ENCODE measurements at regions of chr2 and their contacts with region 1.

Region 1: GRCh38 chr2:203418271-203418670 is 90.1 kb downstream of the ABI2 start:
- DNase-seq: no peak
- H3K4me3 Mint-ChIP-seq: no peak overlapping the region
- H3K27ac Mint-ChIP-seq: no peak overlapping the region
- H3K4me1 Mint-ChIP-seq: no peaks in the 10 kb centered on the region
- H3K27me3 Mint-ChIP-seq: no peaks in the 10 kb centered on the region

Region 2: DNA sequence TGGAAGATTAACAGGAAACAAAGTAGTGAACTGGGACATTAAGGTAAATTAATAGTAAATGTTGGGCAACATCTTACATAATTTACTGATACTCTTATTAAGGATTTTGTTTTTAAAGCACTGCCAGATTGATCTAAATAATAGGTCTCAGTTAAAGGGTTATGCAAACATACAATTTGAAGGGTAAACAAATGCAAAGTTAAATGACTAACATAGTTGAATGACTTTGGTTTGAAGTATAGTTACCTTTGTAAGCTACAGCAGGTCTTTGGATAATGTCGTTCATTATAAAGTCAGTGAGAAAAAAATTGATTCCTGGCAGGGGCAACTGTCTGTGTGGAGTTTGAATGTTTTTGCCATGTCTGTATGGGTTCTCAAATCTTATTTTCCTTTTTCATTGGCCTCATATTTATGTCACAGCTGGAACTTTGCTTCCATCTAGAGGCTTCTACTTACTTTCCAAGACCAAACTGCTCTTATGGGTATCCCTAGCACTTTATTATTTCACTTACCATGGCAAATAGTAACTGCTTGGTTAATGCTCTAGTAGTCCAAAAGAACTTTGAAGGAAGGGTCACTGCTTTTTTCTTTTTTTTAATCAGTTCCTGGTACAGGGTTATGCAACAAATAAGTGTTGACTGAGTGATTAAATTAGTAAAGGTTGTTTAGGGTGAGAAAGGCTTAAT is 295.8 kb before region 1 on chr2:
- CTCF ChIA-PET with region 1: no interaction called
- intact Hi-C with region 1: no loop called
- DNase-seq: no peak
- H3K4me3 Mint-ChIP-seq: no peak overlapping the region
- H3K27ac Mint-ChIP-seq: no peak overlapping the region
- H3K4me1 Mint-ChIP-seq: no peaks in the 10 kb centered on the region
- H3K27me3 Mint-ChIP-seq: no peaks in the 10 kb centered on the region

Region 3: DNA sequence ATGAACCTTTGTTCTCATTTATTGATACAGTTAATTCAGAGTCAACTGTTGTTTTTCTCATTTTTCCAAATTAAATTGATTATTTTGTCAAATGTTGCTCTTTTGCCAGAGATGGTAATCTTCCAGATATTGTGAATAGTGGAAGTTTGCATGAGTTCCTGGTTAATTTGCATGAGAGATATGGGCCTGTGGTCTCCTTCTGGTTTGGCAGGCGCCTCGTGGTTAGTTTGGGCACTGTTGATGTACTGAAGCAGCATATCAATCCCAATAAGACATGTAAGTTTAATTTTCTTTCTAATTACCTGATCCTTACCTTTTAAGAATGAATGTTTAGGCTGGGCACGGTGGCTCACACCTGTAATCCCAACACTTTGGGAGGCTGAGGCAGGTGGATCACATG is 171.6 kb before region 1 on chr2:
- CTCF ChIA-PET with region 1: no interaction called
- intact Hi-C with region 1: no loop called
- DNase-seq: no peak
- H3K4me3 Mint-ChIP-seq: no peak overlapping the region
- H3K27ac Mint-ChIP-seq: no peak overlapping the region
- H3K4me1 Mint-ChIP-seq: peaks cover 18% of the 10 kb centered on the region
- H3K27me3 Mint-ChIP-seq: no peaks in the 10 kb centered on the region

Region 4: GRCh38 chr2:203446780-203447179 is 28.5 kb after region 1 on chr2:
- CTCF ChIA-PET with region 1: no interaction called
- intact Hi-C with region 1: loop called (anchors 1 kb)
- DNase-seq: no peak
- H3K4me3 Mint-ChIP-seq: no peak overlapping the region
- H3K27ac Mint-ChIP-seq: no peak overlapping the region
- H3K4me1 Mint-ChIP-seq: no peaks in the 10 kb centered on the region
- H3K27me3 Mint-ChIP-seq: no peaks in the 10 kb centered on the region

Measured in activated naive CD4-positive, alpha-beta T cell treated with anti-CD3 and anti-CD28 coated beads for 36 hours (primary cell).